Activated CD8-positive, alpha-beta T cell treated with anti-CD3 and anti-CD28 coated beads for 36 hours (primary cell): ENCODE measurements at regions of chr21 and their contacts with region 1.

Region 1: GRCh38 chr21:23968722-23969647 is 1638.3 kb downstream of the MRPL39 start:
- DNase-seq: peak; percentile 88
- ATAC-seq: peak; percentile 96
- H3K4me3 Mint-ChIP-seq: peak overlapping the region; percentile 20
- H3K27ac Mint-ChIP-seq: peak overlapping the region; percentile 29
- H3K4me1 Mint-ChIP-seq: peaks cover 14% of the 10 kb centered on the region
- H3K27me3 Mint-ChIP-seq: no peaks in the 10 kb centered on the region
- CTCF ChIP-seq: peak; percentile 76

Region 2: DNA sequence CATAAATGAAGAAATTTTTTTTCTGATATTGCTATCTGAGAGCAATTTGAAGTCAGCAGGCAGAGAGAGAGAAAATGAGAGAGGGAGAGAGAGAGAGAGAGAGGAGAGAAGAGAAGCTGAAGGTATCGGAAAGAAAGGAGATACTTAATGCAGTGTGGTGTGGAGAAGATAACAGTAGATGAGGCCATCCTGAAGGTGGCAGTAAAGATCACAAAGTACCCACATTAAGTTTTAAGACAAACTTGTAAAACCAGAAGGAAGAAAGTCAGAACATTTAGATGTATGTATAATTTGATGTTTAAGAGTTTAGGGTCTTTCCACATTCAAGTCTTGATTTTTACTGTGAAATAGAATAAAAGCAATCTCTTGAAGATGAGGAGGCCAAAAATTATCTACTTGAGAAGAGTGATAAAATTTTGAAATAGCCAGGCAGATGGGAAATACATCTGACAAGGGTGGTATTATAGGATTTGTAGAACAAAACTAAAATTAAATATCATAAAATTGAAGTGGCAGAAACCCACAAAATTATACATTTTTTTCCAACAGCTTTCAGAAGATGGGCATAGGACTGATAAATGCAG is 115.1 kb before region 1 on chr21:
- CTCF ChIA-PET with region 1: interaction called, 68 read pairs
- POLR2A ChIA-PET with region 1: no interaction called
- intact Hi-C with region 1: loop called (anchors 1 kb)
- DNase-seq: peak; percentile 25
- ATAC-seq: peak; percentile 71
- H3K4me3 Mint-ChIP-seq: no peak overlapping the region
- H3K27ac Mint-ChIP-seq: no peak overlapping the region
- H3K4me1 Mint-ChIP-seq: peaks cover 6% of the 10 kb centered on the region
- H3K27me3 Mint-ChIP-seq: no peaks in the 10 kb centered on the region
- CTCF ChIP-seq: peak; percentile 68

Region 3: GRCh38 chr21:24055696-24056095 is 86.7 kb after region 1 on chr21:
- CTCF ChIA-PET with region 1: no interaction called
- POLR2A ChIA-PET with region 1: no interaction called
- intact Hi-C with region 1: no loop called
- DNase-seq: no peak
- ATAC-seq: no peak
- H3K4me3 Mint-ChIP-seq: no peak overlapping the region
- H3K27ac Mint-ChIP-seq: no peak overlapping the region
- H3K4me1 Mint-ChIP-seq: no peaks in the 10 kb centered on the region
- H3K27me3 Mint-ChIP-seq: no peaks in the 10 kb centered on the region
- CTCF ChIP-seq: no peak

Region 4: DNA sequence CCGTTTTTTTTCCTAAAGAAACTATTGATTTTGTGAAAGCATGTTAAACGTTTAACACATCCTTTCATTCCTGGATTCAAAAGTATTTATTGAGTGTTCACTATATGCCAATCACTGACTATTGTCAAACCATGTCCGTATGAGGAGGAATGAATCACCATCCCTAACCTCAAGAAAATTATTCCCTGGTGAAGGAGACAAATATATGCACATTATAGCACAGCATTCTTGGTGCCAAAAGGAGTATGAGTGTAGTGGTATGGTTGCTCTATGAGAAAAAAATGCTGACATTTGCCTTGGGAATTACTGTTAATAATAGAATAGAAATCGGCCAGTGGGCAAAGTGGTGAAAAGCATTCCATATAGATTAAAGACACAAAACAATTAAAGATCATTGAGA is 248.2 kb after region 1 on chr21:
- CTCF ChIA-PET with region 1: no interaction called
- POLR2A ChIA-PET with region 1: no interaction called
- intact Hi-C with region 1: no loop called
- DNase-seq: no peak
- ATAC-seq: no peak
- H3K4me3 Mint-ChIP-seq: no peak overlapping the region
- H3K27ac Mint-ChIP-seq: no peak overlapping the region
- H3K4me1 Mint-ChIP-seq: no peaks in the 10 kb centered on the region
- H3K27me3 Mint-ChIP-seq: no peaks in the 10 kb centered on the region
- CTCF ChIP-seq: no peak